Esophagus squamous epithelium (tissue), 5 donors: ENCODE measurements at regions of chr12 and their contacts with region 1.

Region 1: DNA sequence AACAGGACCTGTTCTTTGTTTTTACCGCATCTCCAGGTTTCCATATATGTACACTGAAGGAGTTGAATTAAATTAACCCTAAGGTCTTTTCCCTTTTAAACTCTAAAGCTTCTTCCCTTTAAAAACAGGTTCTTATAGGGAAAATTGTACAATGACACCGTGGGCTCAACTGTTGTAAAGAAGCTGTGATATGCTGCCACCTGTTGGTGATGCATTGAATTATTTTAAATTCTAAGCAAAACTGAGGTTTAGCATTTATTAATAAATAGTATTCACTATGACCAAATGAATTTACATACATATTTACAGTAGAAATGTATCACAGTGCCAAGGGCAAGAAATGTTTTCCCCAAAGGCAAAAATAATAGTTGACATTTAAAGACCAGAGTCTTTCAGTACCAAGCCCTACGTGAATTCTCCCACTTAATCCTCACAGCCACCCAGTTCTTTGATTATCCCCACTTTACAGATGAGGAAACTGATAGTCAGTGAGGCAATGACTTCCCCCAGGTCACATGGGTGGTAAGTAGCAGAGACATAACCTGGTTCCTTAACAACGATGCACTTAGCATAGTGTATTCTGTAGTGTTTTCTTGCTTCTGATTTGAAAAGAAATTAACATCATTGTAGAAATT is 35.7 kb upstream of the TMEM263 start:
- DNase-seq: no peak
- H3K4me3 ChIP-seq: no peak overlapping the region
- H3K27ac ChIP-seq: no peak overlapping the region
- H3K4me1 ChIP-seq: no peaks in the 10 kb centered on the region
- H3K27me3 ChIP-seq: peaks cover 0 to 6% (median 0%) of the 10 kb centered on the region in 4 donors
- CTCF ChIP-seq: peak; percentile 56 to 85 (median 77)
- POLR2A ChIP-seq: no peak

Region 2: DNA sequence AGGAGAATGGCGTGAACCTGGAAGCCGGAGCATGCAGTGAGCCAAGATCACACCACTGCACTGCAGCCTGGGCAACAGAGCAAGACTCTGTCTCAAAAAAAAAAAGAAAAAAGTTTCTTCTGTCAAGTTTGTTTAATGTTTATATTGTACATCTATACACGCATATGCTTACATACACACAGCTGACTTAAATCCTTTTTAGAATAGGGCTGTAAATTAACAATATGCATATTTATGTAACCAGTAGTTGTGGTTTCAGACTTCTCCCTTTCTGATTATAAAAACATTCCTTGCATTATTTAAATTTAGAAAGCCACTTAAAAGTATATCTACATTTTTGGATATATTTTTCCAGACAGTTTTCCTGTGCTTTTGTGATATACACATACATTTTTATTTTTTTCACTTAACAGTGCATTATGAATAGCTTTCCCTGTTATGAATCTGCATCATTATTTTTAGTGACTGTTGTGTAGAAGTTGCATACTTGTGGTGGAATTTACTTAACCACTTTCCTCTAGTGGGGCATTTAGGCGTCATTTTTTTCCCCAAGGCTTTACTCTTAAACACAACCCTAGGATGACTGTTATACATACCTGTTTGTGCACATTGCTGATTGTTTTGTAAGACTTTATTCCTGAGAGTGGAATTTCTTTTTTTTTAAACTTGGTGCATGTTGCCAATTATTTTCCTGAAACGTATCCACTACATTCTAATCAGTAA is 533.1 kb before region 1 on chr12:
- intact Hi-C with region 1: loop called (anchors 5 kb)
- DNase-seq: no peak
- H3K4me3 ChIP-seq: no peak overlapping the region
- H3K27ac ChIP-seq: no peak overlapping the region
- H3K4me1 ChIP-seq: no peaks in the 10 kb centered on the region
- H3K27me3 ChIP-seq: no peaks in the 10 kb centered on the region
- CTCF ChIP-seq: no peak
- POLR2A ChIP-seq: no peak

Region 3: DNA sequence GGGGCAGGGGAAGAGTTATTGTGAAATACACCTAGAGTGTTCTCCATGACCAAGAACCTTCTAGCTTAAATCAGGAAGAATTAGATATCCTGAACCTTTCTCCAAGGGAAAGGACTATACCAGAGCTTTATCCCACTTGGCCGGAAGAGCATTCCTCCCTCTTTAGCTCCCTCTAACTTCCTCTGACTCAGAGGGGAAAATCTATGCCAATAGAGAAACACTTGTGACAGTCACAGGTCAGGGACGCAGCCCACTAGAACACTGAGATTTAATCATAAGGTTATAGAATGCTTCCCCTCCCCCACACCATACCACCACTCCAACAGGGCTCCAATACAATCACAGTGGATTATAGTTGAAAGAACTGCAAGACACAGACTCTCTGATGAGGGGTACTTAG is 392.7 kb before region 1 on chr12:
- intact Hi-C with region 1: no loop called
- DNase-seq: no peak
- H3K4me3 ChIP-seq: no peak overlapping the region
- H3K27ac ChIP-seq: no peak overlapping the region
- H3K4me1 ChIP-seq: no peaks in the 10 kb centered on the region
- H3K27me3 ChIP-seq: peaks cover 0 to 7% (median 0%) of the 10 kb centered on the region in 4 donors
- CTCF ChIP-seq: no peak
- POLR2A ChIP-seq: no peak

Region 4: DNA sequence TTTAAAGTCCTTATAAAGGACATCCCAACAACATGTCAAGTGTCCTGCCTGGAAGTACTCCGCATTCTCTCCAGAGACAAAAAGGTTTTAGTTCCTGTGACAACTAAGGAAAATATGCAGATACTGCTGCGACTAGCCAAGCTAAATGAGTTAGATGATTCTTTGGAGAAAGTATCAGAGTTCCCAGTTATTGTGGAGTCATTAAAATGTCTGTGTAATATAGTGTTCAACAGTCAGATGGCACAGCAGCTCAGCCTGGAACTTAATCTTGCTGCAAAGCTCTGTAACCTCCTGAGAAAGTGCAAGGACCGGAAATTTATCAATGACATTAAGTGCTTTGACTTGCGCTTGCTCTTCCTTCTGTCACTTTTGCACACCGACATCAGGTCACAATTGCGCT is 105.3 kb before region 1 on chr12:
- intact Hi-C with region 1: no loop called
- DNase-seq: no peak
- H3K4me3 ChIP-seq: no peak overlapping the region
- H3K27ac ChIP-seq: no peak overlapping the region
- H3K4me1 ChIP-seq: no peaks in the 10 kb centered on the region
- H3K27me3 ChIP-seq: no peaks in the 10 kb centered on the region
- CTCF ChIP-seq: no peak
- POLR2A ChIP-seq: no peak

Region 5: GRCh38 chr12:106831699-106832098 is 88.3 kb before region 1 on chr12:
- intact Hi-C with region 1: no loop called
- DNase-seq: no peak
- H3K4me3 ChIP-seq: no peak overlapping the region
- H3K27ac ChIP-seq: no peak overlapping the region
- H3K4me1 ChIP-seq: no peaks in the 10 kb centered on the region
- H3K27me3 ChIP-seq: no peaks in the 10 kb centered on the region
- CTCF ChIP-seq: no peak
- POLR2A ChIP-seq: no peak

Region 6: DNA sequence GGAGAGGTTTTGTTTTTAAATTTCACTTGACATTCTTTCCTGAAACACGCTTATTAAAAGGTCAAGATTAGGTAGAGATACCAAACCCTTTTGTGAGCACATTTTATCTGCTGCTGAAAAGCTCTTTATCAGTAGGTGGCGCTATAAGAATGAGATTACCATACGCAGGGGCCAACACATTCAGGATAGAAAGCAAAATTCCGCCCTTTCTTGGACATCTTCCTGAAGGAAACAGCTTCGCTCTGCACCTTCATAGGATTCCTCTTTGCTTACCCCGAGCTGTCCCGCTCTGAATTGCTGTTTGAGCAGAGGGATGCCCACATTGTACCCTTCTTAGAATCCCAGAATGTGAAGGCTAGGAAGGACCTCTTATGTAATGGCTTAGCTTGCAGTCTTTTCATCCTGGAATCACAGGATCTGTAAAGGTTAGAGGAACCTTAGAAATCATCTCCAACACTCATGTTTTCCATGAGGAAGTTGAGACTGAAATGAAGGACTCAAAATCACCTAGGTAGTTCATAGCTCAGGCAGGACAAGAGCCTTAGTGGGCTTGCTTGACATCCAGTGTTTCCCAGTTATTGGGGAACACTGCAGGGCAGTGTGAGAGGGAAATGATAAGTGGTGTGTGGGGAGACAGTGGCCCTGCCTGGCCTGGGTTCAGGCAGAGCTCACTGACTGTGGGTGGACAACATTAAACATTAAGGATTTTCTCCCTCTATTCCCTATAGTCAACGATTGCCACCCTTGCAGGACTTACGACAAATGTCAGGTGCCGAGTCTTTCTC is 212.0 kb after region 1 on chr12:
- intact Hi-C with region 1: no loop called
- DNase-seq: no peak
- H3K4me3 ChIP-seq: no peak overlapping the region
- H3K27ac ChIP-seq: no peak overlapping the region
- H3K4me1 ChIP-seq: peaks cover 0 to 5% (median 0%) of the 10 kb centered on the region in 3 donors
- H3K27me3 ChIP-seq: no peaks in the 10 kb centered on the region
- CTCF ChIP-seq: peak; percentile 57 to 87 (median 73)
- POLR2A ChIP-seq: no peak